ENCODE measurements at regions of chr10 and their contacts with region 1.

Region 1: DNA sequence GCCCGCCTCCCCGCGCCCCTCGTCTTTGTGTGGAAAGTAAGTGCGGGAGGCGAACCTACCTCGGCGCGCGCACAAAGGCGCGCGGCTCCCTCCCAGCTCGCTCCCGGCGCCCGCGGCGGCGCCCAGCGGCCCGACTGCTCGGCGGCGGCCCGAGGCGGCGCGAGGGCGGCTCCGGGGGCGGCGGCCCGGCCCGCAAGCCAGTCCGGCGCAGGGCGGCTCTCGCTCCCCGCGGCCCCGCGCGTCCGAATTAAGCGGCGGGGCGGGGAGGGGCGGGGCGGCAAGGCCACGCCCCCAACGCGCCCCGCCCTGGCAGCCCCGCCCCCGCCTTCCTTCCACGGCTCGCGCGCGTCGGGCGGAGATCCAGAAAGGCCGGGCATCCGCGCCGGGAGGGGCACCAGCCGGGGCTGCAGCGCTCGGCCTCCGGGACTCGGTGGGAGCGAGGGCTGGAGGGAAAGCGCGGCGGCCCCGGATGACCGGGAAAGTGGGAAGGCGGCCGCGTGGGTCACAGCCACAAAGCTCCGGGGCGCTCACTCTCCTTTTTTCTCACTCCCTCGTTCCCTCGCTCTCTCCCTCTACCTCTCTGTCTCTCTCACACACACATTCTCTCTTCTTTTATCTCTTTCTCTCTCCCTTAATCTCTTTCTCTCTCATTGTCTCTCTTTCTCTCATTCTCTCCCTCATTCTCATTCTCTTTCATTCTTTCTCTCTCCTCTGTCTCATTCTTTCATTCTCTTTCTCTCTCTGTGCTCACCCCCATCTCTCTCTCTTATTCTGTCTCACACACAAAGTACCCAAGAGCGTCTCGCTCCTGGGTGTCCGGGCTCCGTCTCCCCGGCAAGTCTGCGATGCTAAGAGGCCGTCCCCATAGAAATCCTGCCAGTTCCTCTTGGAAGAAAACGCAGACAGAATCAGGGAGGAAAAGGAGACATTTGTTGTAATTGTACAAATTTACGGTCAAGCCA is 170.2 kb downstream of the FAM107B start:
- DNase-seq: peak; percentile 87
- ATAC-seq: peak; percentile 40
- H3K4me3 Mint-ChIP-seq: peak overlapping the region; percentile 85
- H3K27ac Mint-ChIP-seq: peak overlapping the region; percentile 99
- H3K4me1 Mint-ChIP-seq: peaks cover 72% of the 10 kb centered on the region
- H3K27me3 Mint-ChIP-seq: no peaks in the 10 kb centered on the region

Region 2: GRCh38 chr10:14507176-14507575 is 97.3 kb before region 1 on chr10:
- CTCF ChIA-PET with region 1: interaction called, 3 read pairs
- POLR2A ChIA-PET with region 1: interaction called, 7 read pairs
- intact Hi-C with region 1: loop called (anchors 1 to 2 kb)
- DNase-seq: peak; percentile 58
- ATAC-seq: peak; percentile 50
- H3K4me3 Mint-ChIP-seq: peak overlapping the region; percentile 30
- H3K27ac Mint-ChIP-seq: peak overlapping the region; percentile 72
- H3K4me1 Mint-ChIP-seq: peaks cover 43% of the 10 kb centered on the region
- H3K27me3 Mint-ChIP-seq: no peaks in the 10 kb centered on the region

Region 3: GRCh38 chr10:14588084-14588937 is 16.2 kb before region 1 on chr10:
- CTCF ChIA-PET with region 1: interaction called, 11 read pairs
- POLR2A ChIA-PET with region 1: interaction called, 4 read pairs
- intact Hi-C with region 1: loop called (anchors 1 kb)
- DNase-seq: peak; percentile 77
- ATAC-seq: peak; percentile 70
- H3K4me3 Mint-ChIP-seq: peak overlapping the region; percentile 40
- H3K27ac Mint-ChIP-seq: peak overlapping the region; percentile 89
- H3K4me1 Mint-ChIP-seq: peaks cover 93% of the 10 kb centered on the region
- H3K27me3 Mint-ChIP-seq: no peaks in the 10 kb centered on the region

Region 4: GRCh38 chr10:14812271-14812670 is 207.8 kb after region 1 on chr10:
- CTCF ChIA-PET with region 1: no interaction called
- POLR2A ChIA-PET with region 1: no interaction called
- intact Hi-C with region 1: loop called in 1 of 2 experiments (anchors 5 kb)
- DNase-seq: no peak
- ATAC-seq: peak; percentile 59
- H3K4me3 Mint-ChIP-seq: peak overlapping the region; percentile 23
- H3K27ac Mint-ChIP-seq: no peak overlapping the region
- H3K4me1 Mint-ChIP-seq: peaks cover 25% of the 10 kb centered on the region
- H3K27me3 Mint-ChIP-seq: no peaks in the 10 kb centered on the region

Region 5: DNA sequence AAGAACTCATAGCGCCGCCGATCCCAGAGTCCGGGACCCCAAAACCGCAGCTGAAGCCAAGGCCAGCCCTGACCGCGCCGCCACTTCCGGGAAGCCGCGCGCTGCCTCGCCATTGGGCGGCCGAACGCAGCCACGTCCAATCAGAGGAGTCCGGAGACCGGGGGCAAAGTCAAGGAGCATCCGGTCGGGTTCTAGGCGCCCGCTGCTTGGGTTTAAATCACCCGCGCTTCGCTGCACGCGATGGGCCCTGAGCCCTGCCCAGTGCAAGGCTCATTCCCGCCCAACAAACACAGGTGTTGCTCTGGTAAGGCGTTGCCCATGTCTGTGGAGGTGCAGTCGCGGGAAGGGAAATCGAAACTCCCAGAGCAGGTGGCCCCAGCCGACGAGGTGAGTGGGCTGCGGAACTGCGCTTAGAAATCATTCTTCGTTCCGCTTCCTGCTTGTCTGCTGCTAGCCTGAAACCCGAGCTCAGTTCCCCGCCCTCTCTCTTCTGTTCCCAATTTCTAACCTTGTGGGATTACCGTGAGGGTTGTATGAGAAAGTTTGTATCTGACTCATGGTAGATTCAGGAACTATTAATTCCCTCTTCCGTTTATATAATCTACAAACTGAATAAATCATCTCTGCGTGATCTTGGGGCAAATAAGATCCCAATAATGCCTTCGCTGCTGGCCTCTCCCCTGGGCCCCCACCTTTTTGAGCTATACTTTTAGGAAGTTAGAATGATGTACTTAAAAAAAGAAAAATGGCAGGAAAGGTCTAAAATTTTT is 349.7 kb after region 1 on chr10 and contains the start of gene DCLRE1C:
- CTCF ChIA-PET with region 1: no interaction called
- POLR2A ChIA-PET with region 1: no interaction called
- intact Hi-C with region 1: loop called in 1 of 2 experiments (anchors 1 kb)
- DNase-seq: peak; percentile 94
- ATAC-seq: peak; percentile 94
- H3K4me3 Mint-ChIP-seq: peak within 1 kb of the TSS; percentile 90
- H3K27ac Mint-ChIP-seq: peak within 1 kb of the TSS; percentile 97
- H3K4me1 Mint-ChIP-seq: peaks cover 52% of the 10 kb centered on the region
- H3K27me3 Mint-ChIP-seq: no peaks in the 10 kb centered on the region
- total RNA-seq, gene DCLRE1C: 17.9 to 30.9 TPM

Measured in activated CD4-positive, alpha-beta T cell treated with anti-CD3 and anti-CD28 coated beads for 36 hours (primary cell).